ENCODE measurements at regions of chr18 and their contacts with region 1.

Region 1: DNA sequence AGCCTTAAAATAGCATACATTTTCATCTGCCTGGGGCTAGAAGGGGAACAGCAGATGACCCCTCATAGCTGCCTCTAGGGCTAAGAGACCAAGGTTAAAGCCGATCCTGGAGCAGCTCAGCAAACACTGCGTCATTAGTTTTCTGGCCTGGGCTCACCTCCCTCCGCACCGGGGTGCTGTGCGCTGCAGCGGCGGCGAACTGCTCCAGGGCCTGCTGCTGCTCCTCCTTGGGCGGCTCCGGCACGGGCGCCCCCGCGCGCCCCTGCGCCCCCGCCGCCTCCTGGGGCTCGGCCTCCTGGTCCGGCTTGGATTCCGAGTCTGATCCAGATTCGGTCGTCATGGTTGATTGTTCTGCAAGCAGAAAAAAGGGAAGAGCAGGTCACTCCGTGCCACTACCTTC is 55.0 kb downstream of the EPB41L3 start:
- DNase-seq: no peak
- ATAC-seq: no peak
- H3K4me3 Mint-ChIP-seq: no peak overlapping the region
- H3K27ac Mint-ChIP-seq: no peak overlapping the region
- H3K4me1 Mint-ChIP-seq: peaks cover 5% of the 10 kb centered on the region
- H3K27me3 Mint-ChIP-seq: peaks cover 3% of the 10 kb centered on the region

Region 2: GRCh38 chr18:5513947-5514346 is 25.1 kb after region 1 on chr18:
- CTCF ChIA-PET with region 1: interaction called, 3 read pairs
- POLR2A ChIA-PET with region 1: no interaction called
- intact Hi-C with region 1: loop called in 1 of 2 experiments (anchors 2 kb)
- DNase-seq: no peak
- ATAC-seq: no peak
- H3K4me3 Mint-ChIP-seq: no peak overlapping the region
- H3K27ac Mint-ChIP-seq: no peak overlapping the region
- H3K4me1 Mint-ChIP-seq: peaks cover 10% of the 10 kb centered on the region
- H3K27me3 Mint-ChIP-seq: peaks cover 2% of the 10 kb centered on the region

Region 3: DNA sequence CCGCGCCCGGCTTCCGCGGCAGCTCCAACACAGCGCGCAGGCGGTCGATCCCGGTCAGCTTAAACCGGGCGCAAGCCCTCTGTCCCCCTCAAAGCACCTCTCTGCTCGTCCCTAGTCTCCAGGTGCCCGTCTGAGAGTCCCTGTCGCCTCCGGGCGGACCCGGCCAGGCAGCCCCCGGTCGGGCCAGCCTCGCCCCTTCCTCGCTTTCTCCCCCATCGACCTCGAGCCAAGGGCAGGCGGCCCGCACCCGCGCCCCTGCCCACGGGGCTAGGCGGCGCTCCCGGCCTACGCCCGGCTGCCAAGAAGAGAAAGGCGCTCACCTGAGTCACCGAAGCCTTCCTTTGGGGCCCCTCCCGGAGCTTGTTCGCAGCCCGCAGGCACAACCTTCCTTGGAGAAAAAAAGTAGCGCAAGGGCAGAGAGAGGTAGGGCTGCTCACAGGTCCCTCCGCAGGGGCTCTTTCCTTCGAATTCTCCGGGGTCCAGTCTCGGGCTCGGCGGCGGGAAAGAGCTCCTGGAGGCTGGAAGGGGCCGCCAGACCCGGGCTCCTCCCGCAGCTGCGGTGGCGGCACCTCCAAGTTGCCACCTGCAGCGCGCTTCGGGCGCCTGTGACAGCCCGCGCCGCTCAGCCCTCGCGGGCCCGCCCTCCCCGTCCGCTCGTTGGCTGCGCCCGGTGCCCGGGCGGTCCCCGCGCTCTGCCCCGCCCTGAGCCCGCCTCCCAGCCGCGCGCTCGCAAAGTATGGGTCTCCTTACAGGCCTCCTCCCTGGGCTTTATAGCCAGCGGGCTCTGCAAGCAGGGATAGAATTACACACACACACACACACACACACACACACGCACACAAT is 141.4 kb after region 1 on chr18:
- CTCF ChIA-PET with region 1: no interaction called
- POLR2A ChIA-PET with region 1: no interaction called
- intact Hi-C with region 1: no loop called
- DNase-seq: peak; percentile 78
- ATAC-seq: peak; percentile 93
- H3K4me3 Mint-ChIP-seq: peak overlapping the region; percentile 69
- H3K27ac Mint-ChIP-seq: no peak overlapping the region
- H3K4me1 Mint-ChIP-seq: peaks cover 4% of the 10 kb centered on the region
- H3K27me3 Mint-ChIP-seq: peaks cover 31% of the 10 kb centered on the region